MCF 10A (cell line): ENCODE measurements at regions of chr2 and their contacts with region 1.

Region 1: DNA sequence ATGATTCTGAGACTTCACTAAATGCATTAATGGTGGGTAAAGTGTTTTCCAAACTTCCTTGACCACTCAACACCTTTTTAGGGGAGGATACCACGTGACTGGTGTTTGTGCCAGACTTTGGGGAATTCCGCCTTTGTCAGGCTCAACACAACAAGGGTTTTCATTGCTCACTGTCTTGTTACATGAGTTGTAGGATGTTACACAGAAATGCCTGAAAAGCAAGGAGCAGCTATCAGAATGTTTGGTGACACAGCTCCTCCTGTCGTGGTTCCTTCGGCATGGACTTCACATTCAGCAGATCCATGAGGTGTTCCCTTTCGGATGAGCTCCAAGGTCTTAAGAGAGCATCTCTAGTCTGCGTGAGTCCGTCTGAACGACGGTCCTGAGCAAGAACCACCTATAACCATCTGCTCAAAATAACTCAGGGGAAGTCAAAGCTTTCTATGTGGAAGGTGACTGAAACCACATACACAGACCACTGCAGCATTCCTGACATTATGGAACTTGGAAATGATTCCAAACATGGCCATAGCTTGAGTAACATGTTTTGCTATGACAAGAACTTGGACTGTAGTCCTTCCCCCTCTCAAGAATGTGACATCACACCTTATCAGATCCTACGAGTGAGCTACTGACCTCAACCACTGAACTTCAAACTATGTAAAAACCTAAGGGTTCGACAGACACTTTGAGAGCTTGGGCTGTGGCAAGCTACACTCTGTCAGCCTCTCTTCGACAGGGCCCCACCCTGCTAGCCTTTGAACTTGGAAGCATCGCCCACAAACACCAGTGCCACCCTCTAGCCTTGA is 57.5 kb downstream of the MCFD2 start:
- DNase-seq: no peak
- H3K4me3 Mint-ChIP-seq: no peak overlapping the region
- H3K27ac Mint-ChIP-seq: peak overlapping the region; percentile 64
- H3K4me1 Mint-ChIP-seq: peaks cover 36% of the 10 kb centered on the region
- H3K27me3 Mint-ChIP-seq: no peaks in the 10 kb centered on the region
- CTCF ChIP-seq: no peak

Region 2: GRCh38 chr2:46847235-46848068 is 10.6 kb before region 1 on chr2:
- CTCF ChIA-PET with region 1: no interaction called
- POLR2A ChIA-PET with region 1: interaction called, 15 read pairs
- intact Hi-C with region 1: no loop called
- DNase-seq: peak; percentile 98
- H3K4me3 Mint-ChIP-seq: peak overlapping the region; percentile 47
- H3K27ac Mint-ChIP-seq: peak overlapping the region; percentile 70
- H3K4me1 Mint-ChIP-seq: peaks cover 52% of the 10 kb centered on the region
- H3K27me3 Mint-ChIP-seq: no peaks in the 10 kb centered on the region
- CTCF ChIP-seq: no peak